ENCODE measurements at regions of chr2 and their contacts with region 1.

Region 1: DNA sequence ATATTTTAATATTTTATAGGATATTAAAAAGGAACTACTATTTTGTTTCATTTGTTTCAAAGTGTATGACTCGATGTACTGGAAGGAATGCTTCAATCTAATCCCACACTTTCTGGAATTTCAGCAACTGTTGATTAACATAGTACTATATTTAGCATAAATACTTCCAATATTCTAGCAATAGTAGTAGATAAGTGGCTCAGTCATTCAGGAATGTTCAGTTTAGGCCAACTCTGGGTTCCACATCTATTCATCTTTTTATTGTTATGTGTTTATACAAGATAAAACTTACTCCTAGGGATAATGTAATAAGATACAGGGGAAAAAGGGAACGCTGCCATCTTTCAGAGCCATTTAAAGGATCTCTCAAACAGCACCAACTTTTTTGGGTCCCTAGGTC is 22.3 kb upstream of the ORC2 start:
- DNase-seq: no peak
- ATAC-seq: no peak
- H3K4me3 ChIP-seq: no peak overlapping the region
- H3K27ac ChIP-seq: no peak overlapping the region
- H3K4me1 ChIP-seq: no peaks in the 10 kb centered on the region
- H3K27me3 ChIP-seq: no peaks in the 10 kb centered on the region
- CTCF ChIP-seq: no peak

Region 2: GRCh38 chr2:200765139-200765951 is 220.5 kb before region 1 on chr2:
- CTCF ChIA-PET with region 1: no interaction called
- POLR2A ChIA-PET with region 1: no interaction called
- intact Hi-C with region 1: no loop called
- DNase-seq: peak; percentile 95
- ATAC-seq: peak; percentile 83
- H3K4me3 ChIP-seq: peak overlapping the region; percentile 13; the same call in 1 of the 2 replicates
- H3K27ac ChIP-seq: peak overlapping the region; percentile 98
- H3K4me1 ChIP-seq: peaks cover 64% of the 10 kb centered on the region
- H3K27me3 ChIP-seq: no peaks in the 10 kb centered on the region
- CTCF ChIP-seq: no peak

Region 3: DNA sequence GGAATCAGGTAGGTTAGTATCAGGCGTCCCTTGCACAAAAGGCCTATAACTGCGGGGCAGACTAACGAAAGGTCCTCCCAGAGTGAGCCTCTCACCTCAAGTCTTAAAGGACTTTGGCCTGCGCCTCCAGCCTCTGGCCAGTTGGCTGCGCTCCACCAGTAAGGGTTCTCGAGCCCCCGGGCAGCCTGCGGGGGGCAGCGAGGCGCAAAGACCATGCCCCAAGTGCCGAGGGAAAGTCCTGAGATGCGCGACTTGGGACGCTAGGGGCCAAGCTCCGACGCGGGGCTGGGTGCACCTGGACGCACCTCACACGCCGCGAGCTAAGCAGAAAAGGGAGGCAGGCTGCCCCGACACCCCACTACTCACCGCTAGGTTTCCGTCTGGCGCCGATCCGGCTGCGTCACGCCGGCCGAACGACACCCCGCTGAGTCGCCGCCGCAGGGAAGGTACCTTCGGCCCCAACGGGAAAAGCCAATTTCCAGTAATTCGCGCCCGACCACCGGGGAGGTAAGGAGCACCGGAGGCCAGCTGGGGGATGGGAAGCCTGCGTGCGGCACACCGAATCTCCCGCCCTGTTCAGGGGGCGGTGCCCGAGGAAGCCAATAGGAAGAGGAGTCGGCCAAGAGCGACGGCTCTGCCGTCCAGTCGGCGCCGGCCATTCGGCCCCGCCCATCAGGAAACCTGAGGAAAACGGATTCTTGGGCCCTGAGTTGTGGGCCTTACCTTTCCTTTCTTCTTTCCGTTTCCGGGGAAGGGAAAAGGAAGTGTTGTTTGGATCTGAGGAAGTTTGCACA is 22.5 kb before region 1 on chr2 and contains the start of gene ORC2:
- CTCF ChIA-PET with region 1: no interaction called
- POLR2A ChIA-PET with region 1: interaction called, 13 read pairs
- intact Hi-C with region 1: no loop called
- DNase-seq: peak; percentile 99
- ATAC-seq: peak; percentile 93
- H3K4me3 ChIP-seq: peak within 1 kb of the TSS; percentile 81
- H3K27ac ChIP-seq: peak within 1 kb of the TSS; percentile 58
- H3K4me1 ChIP-seq: peaks cover 55% of the 10 kb centered on the region
- H3K27me3 ChIP-seq: no peaks in the 10 kb centered on the region
- CTCF ChIP-seq: peak; percentile 68
- total RNA-seq, gene ORC2: 17.7 and 25.9 TPM in 2 replicates